Cardiac septum (tissue), 1 donor: ENCODE measurements at regions of chr12 and their contacts with region 1.

Region 1: GRCh38 chr12:14514154-14514842 is 53.4 kb downstream of the PLBD1 start:
- DNase-seq: no peak

Region 2: GRCh38 chr12:14618983-14619382 is 104.7 kb after region 1 on chr12:
- intact Hi-C with region 1: loop called (anchors 2 kb)
- DNase-seq: no peak

Region 3: DNA sequence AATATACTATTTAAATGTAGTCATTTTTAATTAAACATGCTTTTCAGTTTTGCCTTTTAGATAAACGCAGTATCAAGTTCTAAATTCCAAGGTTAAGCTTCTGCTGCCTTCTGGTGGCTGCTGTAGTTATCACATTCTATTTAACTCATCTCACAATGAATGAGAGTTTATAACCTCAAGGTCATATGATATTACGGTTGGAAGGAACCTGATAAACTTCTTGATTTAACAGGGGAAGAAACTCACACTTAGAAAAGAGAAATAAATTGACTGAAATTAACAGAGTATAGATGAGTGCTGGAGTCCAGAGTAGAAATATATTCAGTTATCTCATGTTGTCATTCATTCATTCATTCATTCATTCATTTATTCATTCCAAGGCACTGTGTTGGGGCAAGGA is 150.2 kb after region 1 on chr12:
- intact Hi-C with region 1: loop called (anchors 5 kb)
- DNase-seq: no peak

Region 4: GRCh38 chr12:14701809-14702568 is 187.7 kb after region 1 on chr12:
- intact Hi-C with region 1: no loop called
- DNase-seq: no peak